ENCODE measurements at regions of chr12 and their contacts with region 1.

Region 1: DNA sequence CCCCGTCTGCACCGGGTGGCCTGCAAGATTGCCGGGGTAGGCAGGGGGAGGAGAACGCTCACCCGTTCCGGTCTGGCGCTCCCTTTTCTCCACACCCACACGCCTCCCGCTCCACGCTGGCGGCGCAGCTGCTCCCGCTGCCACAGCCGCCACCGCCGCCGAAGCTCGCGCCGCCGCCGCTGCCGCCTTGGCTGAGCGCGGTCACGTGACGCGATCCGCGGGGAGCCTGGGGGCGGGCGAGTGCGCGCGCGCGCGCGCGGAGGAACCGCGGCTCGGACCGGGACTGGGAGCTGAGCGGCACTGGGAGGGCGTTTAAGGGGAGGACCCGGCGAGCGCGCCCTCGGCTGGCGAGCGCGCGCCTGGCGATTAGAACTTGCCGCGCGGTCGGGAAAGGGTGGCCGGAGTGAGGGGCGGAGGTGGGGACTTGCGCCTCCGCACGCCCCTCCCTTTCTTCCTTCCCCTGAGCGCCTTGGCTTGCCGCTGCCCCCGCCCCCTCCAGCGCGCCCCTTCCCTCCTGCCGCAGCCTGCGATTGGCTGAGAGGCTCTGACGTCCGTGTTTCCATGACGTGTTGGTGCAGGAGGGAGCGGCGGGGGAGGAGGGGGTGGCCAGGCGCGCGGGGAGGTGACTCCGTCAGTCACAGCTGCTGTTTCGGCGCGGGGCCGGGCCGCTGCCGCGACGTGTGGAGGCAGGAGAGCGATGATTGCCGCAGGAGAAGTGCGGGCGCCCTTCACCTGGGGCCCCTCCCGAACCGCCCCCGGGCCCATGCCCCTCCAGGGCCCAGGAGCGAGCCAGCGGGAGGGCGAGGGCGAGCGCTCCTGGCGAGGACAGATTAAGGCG is 738 bp upstream of the ATP2B1 start:
- DNase-seq: peak; percentile 96
- ATAC-seq: peak; percentile 70
- H3K4me3 ChIP-seq: peak overlapping the region; percentile 90
- H3K27ac ChIP-seq: peak overlapping the region; percentile 87
- H3K4me1 ChIP-seq: peaks cover 39% of the 10 kb centered on the region
- H3K27me3 ChIP-seq: no peaks in the 10 kb centered on the region
- CTCF ChIP-seq: no peak

Region 2: DNA sequence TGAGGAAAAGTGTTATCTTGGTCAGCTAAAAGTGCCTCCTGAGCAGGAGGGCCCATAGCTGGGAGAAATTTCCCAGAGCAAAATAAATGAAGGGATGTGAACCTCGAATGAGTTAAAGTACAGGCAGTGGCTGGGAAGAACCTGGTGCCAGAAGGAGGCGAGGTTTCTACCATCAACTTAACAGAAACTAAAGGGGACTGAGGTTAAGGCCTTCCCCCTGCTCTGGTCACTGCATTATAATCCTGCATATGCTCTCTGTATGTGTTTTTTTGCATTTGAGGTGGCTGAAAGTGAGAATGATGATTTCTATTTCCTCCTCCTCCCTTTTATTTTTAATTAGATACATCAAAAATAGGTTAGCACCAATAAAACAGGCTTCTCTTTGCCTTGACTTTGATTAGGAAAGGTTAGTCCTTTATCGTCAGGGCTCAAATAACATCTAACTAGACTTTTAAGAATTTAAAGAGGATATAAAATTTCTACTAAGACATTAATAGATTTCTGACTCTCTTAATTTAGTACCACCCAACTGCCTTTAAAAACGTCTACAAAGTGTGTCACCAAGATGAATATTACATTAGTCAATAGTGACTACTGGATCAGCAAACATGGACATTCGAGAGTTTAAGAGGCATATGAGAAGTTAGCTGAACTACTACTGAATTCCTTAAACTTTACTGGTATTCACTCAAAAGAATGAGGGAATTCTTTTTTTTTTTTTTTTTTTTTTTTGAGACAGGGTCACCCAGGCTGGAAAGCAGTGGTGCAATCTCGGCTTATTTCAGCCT is 234.0 kb before region 1 on chr12:
- CTCF ChIA-PET with region 1: no interaction called
- POLR2A ChIA-PET with region 1: no interaction called
- intact Hi-C with region 1: no loop called
- DNase-seq: peak; percentile 91
- ATAC-seq: peak; percentile 76
- H3K4me3 ChIP-seq: peak overlapping the region; percentile 14; the same call in 1 of the 2 replicates
- H3K27ac ChIP-seq: peak overlapping the region; percentile 91
- H3K4me1 ChIP-seq: peaks cover 53% of the 10 kb centered on the region
- H3K27me3 ChIP-seq: no peaks in the 10 kb centered on the region
- CTCF ChIP-seq: no peak

Region 3: DNA sequence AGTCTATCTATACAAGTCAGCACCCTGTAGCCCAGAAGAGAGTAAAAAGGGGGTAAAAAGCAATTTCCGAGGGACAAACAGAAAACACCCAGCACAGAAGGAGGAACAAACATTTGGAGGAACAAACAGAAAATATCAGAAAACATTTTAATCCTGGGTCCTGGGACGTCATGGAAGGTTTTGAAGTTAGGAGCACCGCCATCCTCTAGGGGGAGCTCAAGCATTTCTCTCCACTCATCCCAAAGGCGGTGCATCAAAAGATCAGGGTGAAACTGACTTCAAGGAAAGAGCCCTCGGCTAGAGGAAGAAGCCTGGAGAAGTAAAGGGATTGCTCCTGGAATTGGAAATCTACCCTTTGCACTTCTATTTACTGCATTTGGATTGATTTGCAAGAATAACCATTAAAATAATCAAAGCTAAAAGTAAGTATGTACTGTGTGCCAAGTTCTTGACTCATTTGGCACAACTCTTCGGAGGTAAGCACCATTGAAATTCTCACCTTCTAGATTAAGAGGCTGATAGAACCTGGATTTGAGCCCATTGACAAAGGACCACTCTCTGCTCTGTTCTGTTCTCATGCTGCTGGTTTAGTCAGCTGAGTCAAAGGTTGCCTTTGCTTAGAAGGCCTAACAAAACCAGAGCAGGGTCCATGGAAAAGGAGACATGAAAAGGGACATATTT is 166.3 kb before region 1 on chr12:
- CTCF ChIA-PET with region 1: no interaction called
- POLR2A ChIA-PET with region 1: no interaction called
- intact Hi-C with region 1: loop called (anchors 2 kb)
- DNase-seq: peak; percentile 91
- ATAC-seq: peak; percentile 94
- H3K4me3 ChIP-seq: no peak overlapping the region
- H3K27ac ChIP-seq: peak overlapping the region; percentile 7
- H3K4me1 ChIP-seq: peaks cover 6% of the 10 kb centered on the region
- H3K27me3 ChIP-seq: no peaks in the 10 kb centered on the region
- CTCF ChIP-seq: peak; percentile 96

Region 4: GRCh38 chr12:89695100-89695499 is 14.3 kb before region 1 on chr12:
- CTCF ChIA-PET with region 1: no interaction called
- POLR2A ChIA-PET with region 1: interaction called, 22 read pairs
- intact Hi-C with region 1: no loop called
- DNase-seq: no peak
- ATAC-seq: peak; percentile 66
- H3K4me3 ChIP-seq: no peak overlapping the region
- H3K27ac ChIP-seq: no peak overlapping the region
- H3K4me1 ChIP-seq: peaks cover 5% of the 10 kb centered on the region
- H3K27me3 ChIP-seq: no peaks in the 10 kb centered on the region
- CTCF ChIP-seq: no peak

Region 5: DNA sequence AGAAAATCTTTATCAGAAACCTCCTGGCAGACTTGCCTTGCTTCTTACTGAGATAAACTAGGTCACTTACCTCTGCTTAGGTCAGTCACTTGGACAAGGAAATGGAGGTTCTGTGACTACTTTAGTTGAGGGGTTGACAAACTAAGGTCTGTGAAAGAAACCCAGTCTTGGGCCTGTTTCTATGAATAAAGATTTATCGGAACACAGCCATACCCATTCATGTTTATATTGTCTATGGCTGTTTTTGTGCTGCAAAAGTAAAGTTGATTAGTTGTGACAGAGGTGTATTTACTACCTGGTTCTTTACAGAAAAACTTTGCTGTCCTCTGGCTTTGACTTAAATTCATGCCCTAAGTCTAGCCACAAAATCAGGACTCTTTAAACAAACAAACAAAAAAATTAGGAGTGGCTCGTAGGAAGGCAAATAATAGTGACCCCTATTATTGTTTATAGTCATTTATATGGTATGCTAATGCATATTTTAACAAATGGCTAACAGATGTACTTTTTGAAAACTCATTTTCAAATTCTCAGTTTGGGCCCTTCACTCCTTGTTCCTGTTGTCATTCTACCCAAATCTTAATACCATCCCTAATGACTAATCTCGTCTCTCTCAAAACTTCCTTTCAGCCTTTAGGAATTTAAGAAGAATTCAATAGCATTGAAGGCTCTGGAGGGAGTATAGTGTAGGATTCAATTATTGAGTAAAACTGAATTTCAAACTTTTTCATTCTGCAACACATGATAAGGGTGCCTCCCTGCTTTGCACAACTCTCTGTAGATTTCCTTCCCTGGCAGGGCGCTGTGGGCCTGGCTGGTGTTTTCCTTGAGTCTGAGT is 41.4 kb after region 1 on chr12:
- CTCF ChIA-PET with region 1: interaction called, 3 read pairs
- POLR2A ChIA-PET with region 1: interaction called, 5 read pairs
- intact Hi-C with region 1: loop called (anchors 2 kb)
- DNase-seq: peak; percentile 90
- ATAC-seq: peak; percentile 85
- H3K4me3 ChIP-seq: peak overlapping the region; percentile 7; the same call in 1 of the 2 replicates
- H3K27ac ChIP-seq: peak overlapping the region; percentile 82
- H3K4me1 ChIP-seq: peaks cover 22% of the 10 kb centered on the region
- H3K27me3 ChIP-seq: no peaks in the 10 kb centered on the region
- CTCF ChIP-seq: no peak

Region 6: GRCh38 chr12:89775063-89775985 is 65.9 kb after region 1 on chr12:
- CTCF ChIA-PET with region 1: interaction called, 6 read pairs
- POLR2A ChIA-PET with region 1: interaction called, 4 read pairs
- intact Hi-C with region 1: loop called (anchors 1 kb)
- DNase-seq: peak; percentile 91
- ATAC-seq: peak; percentile 48
- H3K4me3 ChIP-seq: no peak overlapping the region
- H3K27ac ChIP-seq: peak overlapping the region; percentile 38
- H3K4me1 ChIP-seq: peaks cover 59% of the 10 kb centered on the region
- H3K27me3 ChIP-seq: no peaks in the 10 kb centered on the region
- CTCF ChIP-seq: no peak

Region 7: GRCh38 chr12:90102957-90103652 is 393.7 kb after region 1 on chr12:
- CTCF ChIA-PET with region 1: no interaction called
- POLR2A ChIA-PET with region 1: no interaction called
- intact Hi-C with region 1: loop called (anchors 5 kb)
- DNase-seq: peak; percentile 61
- ATAC-seq: peak; percentile 73
- H3K4me3 ChIP-seq: no peak overlapping the region
- H3K27ac ChIP-seq: no peak overlapping the region
- H3K4me1 ChIP-seq: peaks cover 44% of the 10 kb centered on the region
- H3K27me3 ChIP-seq: no peaks in the 10 kb centered on the region
- CTCF ChIP-seq: peak; percentile 83